ENCODE measurements at regions of chr10 and their contacts with region 1.

Region 1: DNA sequence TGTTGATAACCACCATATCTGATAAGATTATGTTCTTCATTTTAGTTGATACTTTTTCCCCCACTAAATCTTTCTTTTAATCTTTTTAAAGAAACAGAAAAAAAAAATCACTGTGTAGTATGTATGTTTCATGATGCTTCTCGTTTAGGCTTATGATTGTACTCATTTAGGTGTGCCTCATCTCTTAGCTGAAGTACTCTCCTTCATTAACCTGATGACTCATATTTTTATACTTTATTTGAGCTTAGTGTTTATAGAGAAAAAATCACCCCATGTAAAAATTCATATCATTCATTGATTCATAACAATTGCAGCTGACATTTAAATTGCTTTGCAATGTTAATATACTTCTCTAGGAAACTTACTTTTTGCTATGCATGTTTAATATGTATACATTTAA is 158.9 kb downstream of the MLLT10 start:
- DNase-seq: no peak
- ATAC-seq: peak; percentile 11; the same call in 1 of the 2 replicates
- H3K4me3 ChIP-seq: no peak overlapping the region
- H3K27ac ChIP-seq: no peak overlapping the region
- H3K4me1 ChIP-seq: no peaks in the 10 kb centered on the region
- H3K27me3 ChIP-seq: no peaks in the 10 kb centered on the region
- CTCF ChIP-seq: no peak
- POLR2A ChIP-seq: no peak
- RAD21 ChIP-seq: no peak

Region 2: GRCh38 chr10:21579291-21579690 is 113.6 kb before region 1 on chr10:
- CTCF ChIA-PET with region 1: no interaction called
- POLR2A ChIA-PET with region 1: no interaction called
- dilution Hi-C with region 1: no loop called
- in situ Hi-C with region 1: no loop called
- intact Hi-C with region 1: no loop called
- DNase-seq: no peak
- ATAC-seq: no peak
- H3K4me3 ChIP-seq: no peak overlapping the region
- H3K27ac ChIP-seq: no peak overlapping the region
- H3K4me1 ChIP-seq: peaks cover 3% of the 10 kb centered on the region
- H3K27me3 ChIP-seq: no peaks in the 10 kb centered on the region
- CTCF ChIP-seq: no peak
- POLR2A ChIP-seq: no peak
- RAD21 ChIP-seq: no peak

Region 3: GRCh38 chr10:21681156-21681555 is 11.8 kb before region 1 on chr10:
- CTCF ChIA-PET with region 1: no interaction called
- POLR2A ChIA-PET with region 1: no interaction called
- dilution Hi-C with region 1: no loop called
- in situ Hi-C with region 1: no loop called
- intact Hi-C with region 1: loop called (anchors 1 kb)
- DNase-seq: no peak
- ATAC-seq: no peak
- H3K4me3 ChIP-seq: no peak overlapping the region
- H3K27ac ChIP-seq: no peak overlapping the region
- H3K4me1 ChIP-seq: no peaks in the 10 kb centered on the region
- H3K27me3 ChIP-seq: no peaks in the 10 kb centered on the region
- CTCF ChIP-seq: no peak
- POLR2A ChIP-seq: no peak
- RAD21 ChIP-seq: no peak